ENCODE measurements at regions of chr2 and their contacts with region 1.

Region 1: DNA sequence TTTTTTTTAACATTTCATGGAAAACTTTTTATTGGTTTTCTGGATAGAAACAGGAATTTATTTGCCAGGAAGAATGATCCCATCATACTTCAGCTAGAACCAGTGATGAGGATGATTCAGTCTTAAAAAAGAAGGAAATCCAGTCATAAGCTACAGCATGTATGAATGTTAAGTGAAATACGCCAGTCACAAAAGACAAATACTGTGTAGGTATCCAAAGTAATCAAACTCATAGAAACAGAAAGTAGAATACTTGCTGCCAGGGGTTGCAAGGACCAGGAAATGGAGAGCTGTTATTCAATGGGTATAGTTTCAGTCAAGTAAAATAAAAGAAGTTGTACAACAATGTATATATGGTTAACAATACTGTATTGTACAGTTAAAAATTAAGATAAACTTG is 21.3 kb downstream of the PSME4 start:
- DNase-seq: no peak
- ATAC-seq: no peak
- H3K4me3 Mint-ChIP-seq: no peak overlapping the region
- H3K27ac Mint-ChIP-seq: peak overlapping the region; percentile 32
- H3K4me1 Mint-ChIP-seq: peaks cover 67% of the 10 kb centered on the region
- H3K27me3 Mint-ChIP-seq: no peaks in the 10 kb centered on the region
- CTCF ChIP-seq: no peak

Region 2: GRCh38 chr2:53793261-53793660 is 156.2 kb before region 1 on chr2:
- CTCF ChIA-PET with region 1: no interaction called
- POLR2A ChIA-PET with region 1: interaction called, 15 read pairs
- intact Hi-C with region 1: no loop called
- DNase-seq: no peak
- ATAC-seq: no peak
- H3K4me3 Mint-ChIP-seq: no peak overlapping the region
- H3K27ac Mint-ChIP-seq: no peak overlapping the region
- H3K4me1 Mint-ChIP-seq: peaks cover 10% of the 10 kb centered on the region
- H3K27me3 Mint-ChIP-seq: no peaks in the 10 kb centered on the region
- CTCF ChIP-seq: no peak

Region 3: GRCh38 chr2:53877556-53877955 is 71.9 kb before region 1 on chr2:
- CTCF ChIA-PET with region 1: no interaction called
- POLR2A ChIA-PET with region 1: no interaction called
- intact Hi-C with region 1: no loop called
- DNase-seq: no peak
- ATAC-seq: no peak
- H3K4me3 Mint-ChIP-seq: no peak overlapping the region
- H3K27ac Mint-ChIP-seq: no peak overlapping the region
- H3K4me1 Mint-ChIP-seq: no peaks in the 10 kb centered on the region
- H3K27me3 Mint-ChIP-seq: no peaks in the 10 kb centered on the region
- CTCF ChIP-seq: no peak

Region 4: GRCh38 chr2:53907582-53907981 is 41.9 kb before region 1 on chr2:
- CTCF ChIA-PET with region 1: no interaction called
- POLR2A ChIA-PET with region 1: no interaction called
- intact Hi-C with region 1: no loop called
- DNase-seq: no peak
- ATAC-seq: no peak
- H3K4me3 Mint-ChIP-seq: no peak overlapping the region
- H3K27ac Mint-ChIP-seq: no peak overlapping the region
- H3K4me1 Mint-ChIP-seq: peaks cover 2% of the 10 kb centered on the region
- H3K27me3 Mint-ChIP-seq: no peaks in the 10 kb centered on the region
- CTCF ChIP-seq: no peak

Region 5: GRCh38 chr2:54545702-54546450 is 596.4 kb after region 1 on chr2:
- CTCF ChIA-PET with region 1: no interaction called
- POLR2A ChIA-PET with region 1: no interaction called
- intact Hi-C with region 1: no loop called
- DNase-seq: no peak
- ATAC-seq: peak; percentile 40
- H3K4me3 Mint-ChIP-seq: no peak overlapping the region
- H3K27ac Mint-ChIP-seq: no peak overlapping the region
- H3K4me1 Mint-ChIP-seq: peaks cover 12% of the 10 kb centered on the region
- H3K27me3 Mint-ChIP-seq: no peaks in the 10 kb centered on the region
- CTCF ChIP-seq: no peak

Measured in activated B cell treated with CpG ODN at 0.5 μM for 24 hours (primary cell).